CD14-positive monocyte (primary cell): ENCODE measurements at regions of chr7 and their contacts with region 1.

Region 1: DNA sequence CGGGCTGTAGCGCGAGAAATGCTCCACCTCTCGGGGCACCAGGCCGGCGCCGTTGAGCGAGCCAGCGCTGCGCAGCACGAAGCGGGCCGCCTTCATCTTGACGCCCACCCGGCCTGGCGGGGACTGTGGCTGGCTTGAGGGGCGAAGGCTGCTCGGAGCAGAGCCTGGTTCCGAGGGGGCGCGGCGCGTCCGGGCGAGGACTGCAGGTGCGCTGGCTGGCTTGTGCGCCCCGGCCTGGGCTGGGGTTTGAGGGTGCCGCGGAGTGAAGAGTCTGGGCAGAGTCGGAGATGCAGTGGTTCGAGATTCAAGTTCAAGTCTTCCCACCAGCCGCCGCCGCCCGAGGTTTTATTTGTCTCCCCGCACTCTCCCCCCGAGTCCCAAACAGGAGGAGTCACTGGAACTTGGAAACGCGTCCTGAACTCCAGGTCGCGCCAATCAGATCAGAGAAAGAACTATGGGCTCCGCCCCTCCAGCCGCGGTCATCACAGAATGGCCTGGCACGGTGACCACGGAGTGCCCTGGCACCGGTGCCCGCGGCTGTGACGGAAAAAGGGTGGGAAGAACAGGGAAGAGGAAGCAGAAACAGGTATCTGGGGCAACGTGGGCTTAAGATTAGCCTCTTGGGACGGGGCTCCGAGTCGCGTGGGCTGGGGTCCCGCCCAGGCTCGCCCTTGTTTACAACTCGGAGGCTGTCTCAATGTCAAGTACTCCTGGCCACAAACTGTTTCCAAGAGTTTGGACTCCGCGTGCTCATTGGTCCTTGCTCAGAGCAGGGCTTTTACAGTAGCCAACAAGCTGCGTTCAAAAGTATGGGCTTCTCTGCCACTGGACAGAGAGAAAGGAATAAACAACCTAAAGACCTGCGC is at the start of gene PDK4:
- DNase-seq: peak; percentile 63 to 76 (median 68)
- H3K4me3 ChIP-seq: peak within 1 kb of the TSS; percentile 58 to 88 (median 84)
- H3K4me3 Mint-ChIP-seq: peak within 1 kb of the TSS; percentile 96 to 99
- H3K27ac ChIP-seq: peak within 1 kb of the TSS; percentile 74 to 87
- H3K27ac Mint-ChIP-seq: peak within 1 kb of the TSS; percentile 92 to 97 (median 95)
- H3K4me1 ChIP-seq: peaks cover 42 to 56% of the 10 kb centered on the region in 2 donors
- H3K4me1 Mint-ChIP-seq: peaks cover 54% of the 10 kb centered on the region
- H3K27me3 ChIP-seq: no peaks in the 10 kb centered on the region
- H3K27me3 Mint-ChIP-seq: no peaks in the 10 kb centered on the region
- CTCF ChIP-seq: no peak
- polyA plus RNA-seq, gene PDK4: 2.2 to 26.0 (median 12.4) TPM

Region 2: GRCh38 chr7:95569720-95570119 is 26.7 kb before region 1 on chr7:
- intact Hi-C with region 1: loop called in 1 of 2 experiments (anchors 1 kb)
- DNase-seq: no peak
- H3K4me3 ChIP-seq: no peak overlapping the region
- H3K4me3 Mint-ChIP-seq: no peak overlapping the region
- H3K27ac ChIP-seq: no peak overlapping the region
- H3K27ac Mint-ChIP-seq: no peak overlapping the region
- H3K4me1 ChIP-seq: no peaks in the 10 kb centered on the region
- H3K4me1 Mint-ChIP-seq: no peaks in the 10 kb centered on the region
- H3K27me3 ChIP-seq: no peaks in the 10 kb centered on the region
- H3K27me3 Mint-ChIP-seq: peaks cover 0 to 1% (median 0%) of the 10 kb centered on the region in 3 donors
- CTCF ChIP-seq: no peak

Region 3: GRCh38 chr7:95632609-95633008 is 36.2 kb after region 1 on chr7:
- intact Hi-C with region 1: loop called in 1 of 2 experiments (anchors 5 kb)
- DNase-seq: no peak
- H3K4me3 ChIP-seq: no peak overlapping the region
- H3K4me3 Mint-ChIP-seq: no peak overlapping the region
- H3K27ac ChIP-seq: no peak overlapping the region
- H3K27ac Mint-ChIP-seq: no peak overlapping the region
- H3K4me1 ChIP-seq: peaks cover 11 to 14% of the 10 kb centered on the region in 2 donors
- H3K4me1 Mint-ChIP-seq: peaks cover 23% of the 10 kb centered on the region
- H3K27me3 ChIP-seq: no peaks in the 10 kb centered on the region
- H3K27me3 Mint-ChIP-seq: peaks cover 0 to 1% (median 0%) of the 10 kb centered on the region in 3 donors
- CTCF ChIP-seq: no peak

Region 4: DNA sequence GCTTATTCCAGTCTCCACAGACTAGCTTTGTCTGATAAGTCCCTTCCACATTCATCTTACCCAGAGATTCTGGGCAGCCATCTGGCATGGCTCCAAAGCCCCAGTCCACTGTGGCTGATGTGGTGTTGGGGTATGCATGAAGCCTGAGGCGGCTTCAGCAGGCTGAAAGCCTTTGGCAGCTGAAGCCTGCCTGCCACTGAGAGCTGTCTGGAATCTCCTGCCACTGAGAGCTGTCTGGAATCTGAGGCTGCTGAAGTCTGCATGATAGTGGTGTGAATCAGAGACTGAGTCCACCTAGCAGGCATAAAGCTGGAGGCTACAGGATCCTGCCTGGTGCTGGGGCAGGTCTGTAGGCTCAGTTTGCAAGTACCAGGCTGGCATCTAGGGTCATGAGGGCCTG is 263.0 kb after region 1 on chr7:
- intact Hi-C with region 1: no loop called
- DNase-seq: no peak
- H3K4me3 ChIP-seq: no peak overlapping the region
- H3K4me3 Mint-ChIP-seq: no peak overlapping the region
- H3K27ac ChIP-seq: no peak overlapping the region
- H3K27ac Mint-ChIP-seq: no peak overlapping the region
- H3K4me1 ChIP-seq: no peaks in the 10 kb centered on the region
- H3K4me1 Mint-ChIP-seq: no peaks in the 10 kb centered on the region
- H3K27me3 ChIP-seq: no peaks in the 10 kb centered on the region
- H3K27me3 Mint-ChIP-seq: peaks cover 0 to 2% (median 2%) of the 10 kb centered on the region in 3 donors
- CTCF ChIP-seq: no peak